Activated CD4-positive, alpha-beta T cell treated with anti-CD3 and anti-CD28 coated beads, Interleukin-2, amount 10 ng/mL, durations not matched to agents 24 days and 14 days (primary cell): ENCODE measurements at regions of chr12 and their contacts with region 1.

Region 1: GRCh38 chr12:11015775-11016430 is 6.5 kb downstream of the TAS2R19 start:
- DNase-seq: no peak
- H3K4me3 Mint-ChIP-seq: no peak overlapping the region
- H3K27ac Mint-ChIP-seq: no peak overlapping the region
- H3K4me1 Mint-ChIP-seq: peaks cover 2% of the 10 kb centered on the region
- H3K27me3 Mint-ChIP-seq: no peaks in the 10 kb centered on the region

Region 2: DNA sequence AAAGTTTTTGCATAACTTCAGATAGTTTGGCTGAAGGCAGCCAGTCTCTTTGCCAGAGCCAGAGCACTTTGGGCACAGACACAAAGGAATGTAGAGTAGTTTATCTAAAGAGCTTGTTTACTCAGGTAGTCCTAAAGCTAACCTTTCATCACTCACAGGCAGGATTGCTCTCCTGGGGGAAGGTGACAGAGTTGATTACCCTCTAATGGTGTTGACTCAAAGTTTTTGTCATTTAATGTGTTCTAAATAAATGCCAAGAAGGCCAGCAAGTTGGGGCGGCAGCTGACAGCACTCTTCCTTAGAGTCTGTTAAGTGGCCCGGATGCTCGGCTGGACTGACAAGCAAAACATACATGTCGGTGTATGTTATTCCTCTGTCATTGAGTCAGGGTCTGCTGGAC is 55.5 kb after region 1 on chr12:
- intact Hi-C with region 1: loop called (anchors 5 kb)
- DNase-seq: no peak
- H3K4me3 Mint-ChIP-seq: no peak overlapping the region
- H3K27ac Mint-ChIP-seq: no peak overlapping the region
- H3K4me1 Mint-ChIP-seq: peaks cover 3% of the 10 kb centered on the region
- H3K27me3 Mint-ChIP-seq: no peaks in the 10 kb centered on the region